T-cell (primary cell): ENCODE measurements at regions of chr9 and their contacts with region 1.

Region 1: DNA sequence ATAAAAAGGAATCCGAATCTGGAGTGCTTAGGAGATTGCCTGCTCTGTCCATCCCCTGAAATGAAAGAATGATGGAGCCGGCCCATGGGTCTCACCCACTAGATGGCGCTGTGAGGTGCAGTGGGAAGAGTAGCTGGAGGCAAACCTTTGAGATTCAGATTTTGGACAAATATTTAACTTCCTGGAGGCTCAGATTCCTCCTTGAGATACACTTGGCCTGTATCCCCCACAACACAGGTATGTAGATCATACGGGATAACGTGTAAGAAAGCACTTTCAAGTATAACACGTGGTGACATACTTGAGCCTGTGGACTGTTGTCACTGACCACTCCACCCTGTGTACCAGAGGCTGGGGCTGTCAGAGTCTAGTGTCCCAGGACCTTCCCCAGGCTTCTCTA is 32.3 kb downstream of the TRMO start:
- DNase-seq: peak in 34 of 35 experiments; percentile 33 to 79 (median 58)
- ATAC-seq: peak in 3 of 4 experiments; percentile 50 to 73 (median 63)
- H3K4me3 ChIP-seq: no peak overlapping the region
- H3K4me3 Mint-ChIP-seq: no peak overlapping the region
- H3K27ac ChIP-seq: no peak overlapping the region
- H3K27ac Mint-ChIP-seq: no peak overlapping the region
- H3K4me1 ChIP-seq: peaks cover 0 to 9% of the 10 kb centered on the region in 2 experiments
- H3K4me1 Mint-ChIP-seq: peaks cover 10 to 14% (median 10%) of the 10 kb centered on the region in 3 donors
- H3K27me3 ChIP-seq: no peaks in the 10 kb centered on the region
- H3K27me3 Mint-ChIP-seq: no peaks in the 10 kb centered on the region

Region 2: DNA sequence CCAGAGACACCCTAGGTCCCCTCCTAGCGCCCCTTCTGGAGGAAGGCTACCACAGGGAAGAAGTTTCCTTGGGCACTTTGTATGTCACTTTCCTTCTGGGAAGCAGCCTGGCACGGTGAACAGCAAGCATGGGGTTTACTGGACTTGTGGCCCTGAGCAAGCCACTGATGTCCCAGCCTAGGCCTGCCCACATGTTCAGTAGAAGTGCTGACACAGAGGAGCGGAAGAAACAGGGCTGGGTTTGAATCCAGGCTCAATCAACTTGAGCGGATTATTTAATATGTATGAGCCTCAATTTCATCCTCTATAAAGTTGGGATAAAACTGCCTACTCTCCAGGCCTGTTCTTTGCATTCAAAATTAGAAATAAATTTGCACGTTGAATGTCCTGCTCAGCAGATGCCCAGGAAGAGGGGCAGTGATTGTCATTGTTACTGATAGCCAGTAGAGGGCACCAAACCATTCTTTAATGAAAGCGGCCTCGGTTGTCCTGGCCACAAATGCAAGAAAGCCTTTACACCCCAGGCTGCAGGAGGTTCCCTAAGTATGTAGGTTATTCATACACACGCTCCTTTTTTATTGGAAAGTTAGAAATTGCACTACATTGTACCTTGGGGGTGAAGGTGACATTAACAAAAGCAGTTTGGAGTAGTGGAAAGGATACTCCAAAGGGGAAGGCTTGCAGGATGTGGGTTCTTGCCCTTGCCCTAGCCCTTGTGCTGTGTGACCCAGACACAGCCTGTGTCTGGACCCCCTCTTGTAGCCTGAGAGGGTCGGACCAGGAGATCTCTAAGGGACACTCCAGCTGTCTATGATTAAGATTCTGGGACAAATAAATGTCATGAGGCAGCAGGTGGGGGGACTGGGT is 179.4 kb before region 1 on chr9:
- CTCF ChIA-PET with region 1: interaction called in 1 of 2 experiments, 10 read pairs
- POLR2A ChIA-PET with region 1: no interaction called
- DNase-seq: peak in 29 of 35 experiments; percentile 6 to 79 (median 28)
- ATAC-seq: peak; percentile 77 to 87 (median 84)
- H3K4me3 ChIP-seq: no peak overlapping the region
- H3K4me3 Mint-ChIP-seq: peak overlapping the region in 1 of 3 donors; percentile 47
- H3K27ac ChIP-seq: no peak overlapping the region
- H3K27ac Mint-ChIP-seq: peak overlapping the region in 1 of 2 donors; percentile 43
- H3K4me1 ChIP-seq: peaks cover 20 to 21% of the 10 kb centered on the region in 2 experiments
- H3K4me1 Mint-ChIP-seq: peaks cover 33 to 40% (median 34%) of the 10 kb centered on the region in 3 donors
- H3K27me3 ChIP-seq: peaks cover 0 to 27% of the 10 kb centered on the region in 2 experiments
- H3K27me3 Mint-ChIP-seq: peaks cover 10 to 16% of the 10 kb centered on the region in 2 donors

Region 3: GRCh38 chr9:97900738-97901565 is 10.9 kb after region 1 on chr9:
- CTCF ChIA-PET with region 1: interaction called, 25 to 53 read pairs
- POLR2A ChIA-PET with region 1: interaction called, 3 to 4 read pairs
- DNase-seq: peak in 4 of 35 experiments; percentile 13 to 79 (median 26)
- ATAC-seq: no peak
- H3K4me3 ChIP-seq: no peak overlapping the region
- H3K4me3 Mint-ChIP-seq: peak overlapping the region in 1 of 3 donors; percentile 47
- H3K27ac ChIP-seq: peak overlapping the region; percentile 60
- H3K27ac Mint-ChIP-seq: peak overlapping the region; percentile 85 to 88
- H3K4me1 ChIP-seq: peaks cover 38 to 51% of the 10 kb centered on the region in 2 experiments
- H3K4me1 Mint-ChIP-seq: peaks cover 54 to 67% (median 66%) of the 10 kb centered on the region in 3 donors
- H3K27me3 ChIP-seq: no peaks in the 10 kb centered on the region
- H3K27me3 Mint-ChIP-seq: no peaks in the 10 kb centered on the region

Region 4: GRCh38 chr9:97906236-97906831 is 16.3 kb after region 1 on chr9:
- CTCF ChIA-PET with region 1: interaction called, 25 to 53 read pairs
- POLR2A ChIA-PET with region 1: interaction called, 3 to 4 read pairs
- DNase-seq: peak in 32 of 35 experiments; percentile 37 to 78 (median 56)
- ATAC-seq: peak in 3 of 4 experiments; percentile 6 to 58 (median 14)
- H3K4me3 ChIP-seq: peak overlapping the region; percentile 29 to 39
- H3K4me3 Mint-ChIP-seq: peak overlapping the region; percentile 71 to 79 (median 76)
- H3K27ac ChIP-seq: peak overlapping the region; percentile 75
- H3K27ac Mint-ChIP-seq: peak overlapping the region; percentile 93 to 97
- H3K4me1 ChIP-seq: peaks cover 66 to 89% of the 10 kb centered on the region in 2 experiments
- H3K4me1 Mint-ChIP-seq: peaks cover 92 to 99% (median 92%) of the 10 kb centered on the region in 3 donors
- H3K27me3 ChIP-seq: no peaks in the 10 kb centered on the region
- H3K27me3 Mint-ChIP-seq: no peaks in the 10 kb centered on the region

Region 5: DNA sequence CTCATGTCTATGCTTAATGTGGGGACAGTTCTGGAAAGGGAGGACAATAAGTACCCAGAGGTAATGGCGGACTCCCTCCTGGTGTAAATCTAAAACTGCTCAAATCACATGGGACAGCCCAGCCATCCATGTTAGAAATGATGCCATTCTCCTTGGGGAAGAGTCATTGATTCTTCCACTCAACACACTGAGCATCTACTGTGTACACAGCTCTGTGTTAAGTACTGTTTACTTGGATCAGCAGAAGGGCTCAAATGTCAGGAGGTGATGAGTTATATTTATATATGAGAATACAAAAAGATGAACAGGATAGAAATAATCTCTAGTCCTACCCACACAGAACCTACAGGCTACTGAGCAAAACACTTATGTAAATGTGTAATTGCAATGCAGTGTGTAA is 134.7 kb after region 1 on chr9:
- CTCF ChIA-PET with region 1: no interaction called
- POLR2A ChIA-PET with region 1: no interaction called
- DNase-seq: no peak
- ATAC-seq: no peak
- H3K4me3 ChIP-seq: no peak overlapping the region
- H3K4me3 Mint-ChIP-seq: no peak overlapping the region
- H3K27ac ChIP-seq: no peak overlapping the region
- H3K27ac Mint-ChIP-seq: no peak overlapping the region
- H3K4me1 ChIP-seq: no peaks in the 10 kb centered on the region
- H3K4me1 Mint-ChIP-seq: peaks cover 0 to 10% (median 0%) of the 10 kb centered on the region in 3 donors
- H3K27me3 ChIP-seq: no peaks in the 10 kb centered on the region
- H3K27me3 Mint-ChIP-seq: no peaks in the 10 kb centered on the region

Region 6: DNA sequence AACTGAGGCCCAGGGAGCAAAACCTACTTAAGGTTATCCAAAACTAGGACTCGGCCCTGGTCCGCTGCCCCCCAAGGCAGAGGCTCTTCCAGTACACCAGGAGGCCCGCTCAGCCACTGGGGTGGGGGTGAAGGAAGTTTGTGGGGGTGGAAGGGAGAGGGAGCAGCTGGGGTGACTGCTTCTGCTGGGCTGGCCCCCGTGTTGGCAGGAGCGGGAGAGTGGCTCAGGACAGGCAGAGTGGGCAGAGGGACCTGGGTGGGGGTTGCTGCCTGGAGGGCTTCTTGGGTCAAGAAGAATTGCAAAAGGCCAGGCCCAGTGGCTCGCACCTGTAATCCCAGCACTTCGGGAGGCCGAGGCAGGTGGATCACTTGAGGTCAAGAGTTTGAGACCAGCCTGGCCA is 237.2 kb after region 1 on chr9:
- CTCF ChIA-PET with region 1: interaction called in 1 of 2 experiments, 15 read pairs
- POLR2A ChIA-PET with region 1: no interaction called
- DNase-seq: no peak
- ATAC-seq: no peak
- H3K4me3 ChIP-seq: no peak overlapping the region
- H3K4me3 Mint-ChIP-seq: no peak overlapping the region
- H3K27ac ChIP-seq: no peak overlapping the region
- H3K27ac Mint-ChIP-seq: no peak overlapping the region
- H3K4me1 ChIP-seq: peaks cover 0 to 13% of the 10 kb centered on the region in 2 experiments
- H3K4me1 Mint-ChIP-seq: peaks cover 8 to 14% (median 8%) of the 10 kb centered on the region in 3 donors
- H3K27me3 ChIP-seq: no peaks in the 10 kb centered on the region
- H3K27me3 Mint-ChIP-seq: no peaks in the 10 kb centered on the region